Naive thymus-derived CD8-positive, alpha-beta T cell (primary cell): ENCODE measurements at regions of chr9 and their contacts with region 1.

Region 1: DNA sequence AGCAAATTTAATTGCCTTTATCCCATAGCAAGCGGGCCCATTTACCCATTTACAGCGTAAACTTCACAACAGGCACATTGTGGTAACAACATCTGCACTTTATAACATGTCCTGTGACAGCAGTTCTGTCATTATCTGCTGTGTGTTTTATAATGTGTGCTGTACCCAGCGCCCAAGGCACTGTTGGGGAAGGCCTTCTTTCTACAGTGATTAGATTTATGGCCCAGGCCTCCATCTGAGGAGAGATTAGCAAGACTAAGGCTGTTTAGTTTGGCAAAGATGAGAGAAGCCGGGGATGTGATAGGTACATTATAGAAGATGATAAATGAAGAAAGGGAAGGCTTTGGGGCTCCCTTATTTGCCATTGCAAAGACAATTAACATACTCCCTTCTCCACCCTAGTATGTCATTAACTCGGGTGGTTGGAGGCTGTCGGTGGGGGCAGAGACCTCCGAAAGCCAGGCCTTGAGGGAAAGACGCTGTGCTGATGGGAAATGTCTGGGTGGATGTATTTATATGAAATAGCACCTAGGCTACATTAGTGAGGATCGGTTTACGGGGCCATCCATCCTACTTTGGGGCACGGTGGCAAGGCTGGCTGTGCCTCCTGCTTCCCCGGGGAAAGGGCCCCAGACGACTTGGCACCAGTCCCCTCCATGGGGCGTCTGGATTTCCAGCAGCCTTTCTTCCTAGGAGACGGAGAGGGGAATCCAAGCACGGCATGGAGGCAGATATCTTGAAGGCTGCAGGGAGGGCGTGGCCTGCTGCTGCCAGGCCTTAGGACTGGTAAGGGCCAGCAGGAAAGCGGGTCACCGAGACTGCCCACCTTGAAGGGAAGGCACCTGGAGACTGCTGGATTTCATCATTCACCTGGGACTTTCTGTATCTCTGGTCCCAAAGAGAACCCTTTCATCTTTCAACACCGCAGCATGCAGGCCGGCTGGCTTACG is 64.3 kb upstream of the PTCH1 start:
- DNase-seq: no peak
- ATAC-seq: no peak
- H3K4me3 Mint-ChIP-seq: no peak overlapping the region
- H3K27ac Mint-ChIP-seq: no peak overlapping the region
- H3K4me1 Mint-ChIP-seq: peaks cover 0 to 9% (median 0%) of the 10 kb centered on the region in 4 donors
- H3K27me3 Mint-ChIP-seq: peaks cover 0 to 6% (median 5%) of the 10 kb centered on the region in 5 donors

Region 2: GRCh38 chr9:95486070-95486717 is 94.9 kb before region 1 on chr9:
- POLR2A ChIA-PET with region 1: no interaction called
- DNase-seq: no peak
- ATAC-seq: no peak
- H3K4me3 Mint-ChIP-seq: no peak overlapping the region
- H3K27ac Mint-ChIP-seq: no peak overlapping the region
- H3K4me1 Mint-ChIP-seq: peaks cover 20 to 70% (median 37%) of the 10 kb centered on the region in 4 donors
- H3K27me3 Mint-ChIP-seq: peaks cover 0 to 12% (median 0%) of the 10 kb centered on the region in 5 donors

Region 3: GRCh38 chr9:95570150-95570549 is 10.9 kb before region 1 on chr9:
- POLR2A ChIA-PET with region 1: no interaction called
- DNase-seq: no peak
- ATAC-seq: no peak
- H3K4me3 Mint-ChIP-seq: peak overlapping the region in 8 of 10 donors; percentile 4 to 54 (median 28)
- H3K27ac Mint-ChIP-seq: peak overlapping the region in 2 of 10 donors; percentile 8 to 48
- H3K4me1 Mint-ChIP-seq: peaks cover 7 to 28% (median 14%) of the 10 kb centered on the region in 4 donors
- H3K27me3 Mint-ChIP-seq: peaks cover 12 to 42% (median 21%) of the 10 kb centered on the region in 5 donors

Region 4: DNA sequence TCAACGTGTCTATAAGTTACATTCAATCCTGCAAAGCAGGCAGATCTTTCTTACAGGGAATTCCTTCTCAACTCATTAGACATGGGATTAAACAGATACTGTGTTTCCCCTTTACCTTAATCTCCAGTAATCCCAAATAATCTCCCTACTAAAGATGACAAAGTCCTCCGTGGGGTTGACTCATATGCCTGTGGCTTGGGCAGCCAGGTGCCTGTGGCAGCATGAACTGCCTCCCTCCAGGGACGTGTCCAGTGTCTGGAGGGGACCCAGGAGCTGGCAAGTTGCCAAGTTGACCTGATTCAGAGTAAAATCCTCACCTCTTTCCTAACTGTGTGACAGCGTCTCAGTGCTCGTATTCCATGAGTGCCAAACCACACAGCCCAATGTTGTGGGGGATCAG is 30.3 kb after region 1 on chr9:
- POLR2A ChIA-PET with region 1: no interaction called
- DNase-seq: no peak
- ATAC-seq: no peak
- H3K4me3 Mint-ChIP-seq: no peak overlapping the region
- H3K27ac Mint-ChIP-seq: peak overlapping the region in 1 of 10 donors; percentile 37
- H3K4me1 Mint-ChIP-seq: peaks cover 0 to 5% (median 0%) of the 10 kb centered on the region in 4 donors
- H3K27me3 Mint-ChIP-seq: peaks cover 0 to 9% (median 2%) of the 10 kb centered on the region in 5 donors

Region 5: DNA sequence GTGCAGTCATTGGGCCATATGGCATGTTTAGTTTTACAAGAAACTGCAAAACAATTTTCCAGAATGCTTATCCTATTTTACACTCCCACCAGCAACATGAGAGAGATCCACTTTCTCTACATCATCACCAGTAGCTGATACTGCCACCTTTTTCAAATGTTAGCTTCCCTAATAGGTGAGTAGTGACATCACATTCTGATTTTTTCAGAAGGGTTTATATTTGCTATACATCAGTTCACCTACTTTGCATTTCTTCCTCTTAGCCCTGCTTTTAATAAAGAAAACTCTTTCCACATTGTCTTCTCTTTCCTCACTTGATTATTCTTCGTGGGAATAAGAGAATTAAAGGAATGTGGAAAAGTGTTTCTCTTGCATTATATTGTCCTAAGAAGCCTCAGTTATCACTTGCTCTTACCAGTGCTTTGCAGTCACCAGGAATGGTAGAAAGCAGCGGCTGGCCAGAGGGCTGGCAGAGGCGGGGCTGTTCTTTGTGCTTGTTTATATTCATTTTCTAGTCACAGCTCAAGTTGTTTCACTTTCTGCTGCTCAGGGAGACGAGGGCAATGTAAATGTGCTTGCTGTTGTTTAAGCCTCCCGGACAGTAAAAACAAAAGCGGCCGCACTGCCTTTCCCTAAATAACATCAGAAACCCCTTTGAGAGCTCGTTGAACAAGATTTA is 556.0 kb after region 1 on chr9:
- POLR2A ChIA-PET with region 1: interaction called, 11 read pairs
- DNase-seq: no peak
- ATAC-seq: no peak
- H3K4me3 Mint-ChIP-seq: peak overlapping the region in 2 of 10 donors; percentile 50 to 61
- H3K27ac Mint-ChIP-seq: peak overlapping the region in 2 of 10 donors; percentile 38 to 65
- H3K4me1 Mint-ChIP-seq: peaks cover 0 to 21% (median 3%) of the 10 kb centered on the region in 4 donors
- H3K27me3 Mint-ChIP-seq: peaks cover 0 to 5% (median 0%) of the 10 kb centered on the region in 5 donors